GM12878 (cell line): ENCODE measurements at regions of chr3 and their contacts with region 1.

Region 1: DNA sequence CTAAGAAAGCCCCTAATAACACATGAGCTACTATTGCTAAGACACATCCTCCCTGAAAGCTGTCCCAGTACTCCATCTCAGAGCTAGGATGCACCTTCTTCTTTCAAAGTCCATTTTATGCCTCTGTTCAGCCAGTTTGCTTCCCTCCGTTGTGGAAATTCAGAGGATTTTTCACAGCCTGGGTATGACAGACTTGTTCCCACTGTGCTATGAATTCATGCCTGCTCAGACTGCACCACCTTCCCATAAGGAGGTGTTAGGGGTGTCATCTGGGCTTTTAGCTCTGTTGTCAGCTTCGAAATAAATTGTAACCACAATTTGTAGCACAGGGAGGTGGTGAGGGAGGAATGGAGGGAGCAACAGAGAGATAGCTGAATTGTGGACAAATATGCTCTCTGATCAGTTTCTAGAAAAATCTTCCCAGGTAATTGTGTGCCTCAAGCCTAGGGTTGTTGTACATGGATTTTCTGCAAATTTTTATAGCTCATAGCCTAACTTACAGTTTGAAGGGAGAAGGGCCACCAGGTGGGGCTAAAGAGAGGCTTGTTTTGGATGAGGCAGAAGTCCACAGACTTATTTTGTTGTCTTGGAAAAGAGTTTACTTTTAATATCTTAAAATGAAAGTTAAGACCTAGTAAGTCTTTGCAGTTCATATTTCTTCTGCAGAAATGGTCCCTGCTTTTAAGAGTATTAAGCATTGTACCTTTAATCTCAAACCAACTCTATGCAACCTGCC is 462.0 kb downstream of the PDCD6IP start:
- DNase-seq: no peak
- ATAC-seq: peak; percentile 76
- H3K4me3 ChIP-seq: no peak overlapping the region
- H3K27ac ChIP-seq: no peak overlapping the region
- H3K4me1 ChIP-seq: no peaks in the 10 kb centered on the region
- H3K27me3 ChIP-seq: no peaks in the 10 kb centered on the region
- CTCF ChIP-seq: peak; percentile 67 to 71 (median 68)
- EP300 ChIP-seq: no peak
- POLR2A ChIP-seq: no peak
- RAD21 ChIP-seq: peak; percentile 74

Region 2: DNA sequence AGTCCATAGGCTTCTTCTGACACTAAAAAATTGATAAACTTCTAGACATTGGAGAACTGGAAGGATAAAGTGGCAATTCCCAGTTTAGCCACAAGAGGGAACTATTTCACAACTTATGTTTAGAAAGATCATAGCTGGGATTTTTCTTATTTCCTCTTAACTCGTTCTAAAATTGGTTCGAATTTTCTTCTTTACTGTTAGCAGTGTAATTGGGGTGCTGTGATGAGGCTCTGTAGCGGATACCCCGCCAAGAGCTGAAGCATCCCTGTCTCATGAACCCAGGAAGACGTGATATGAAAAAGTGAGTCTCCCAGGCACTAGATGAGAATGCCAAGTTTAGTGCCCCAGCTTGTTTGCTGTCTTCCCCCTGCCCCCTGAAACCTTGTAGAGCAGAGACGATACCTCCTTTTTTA is 376.9 kb before region 1 on chr3:
- CTCF ChIA-PET with region 1: interaction called, 36 read pairs
- POLR2A ChIA-PET with region 1: no interaction called
- RAD21 ChIA-PET with region 1: interaction called, 19 read pairs
- SMC1A ChIA-PET with region 1: interaction called, 13 read pairs
- in situ Hi-C with region 1: no loop called
- intact Hi-C with region 1: loop called (anchors 5 kb)
- DNase-seq: no peak
- ATAC-seq: peak; percentile 64
- H3K4me3 ChIP-seq: no peak overlapping the region
- H3K27ac ChIP-seq: no peak overlapping the region
- H3K4me1 ChIP-seq: peaks cover 4% of the 10 kb centered on the region; the same call in 1 of the 2 replicates
- H3K27me3 ChIP-seq: no peaks in the 10 kb centered on the region
- CTCF ChIP-seq: peak; percentile 63 to 77 (median 75)
- EP300 ChIP-seq: no peak
- POLR2A ChIP-seq: no peak
- RAD21 ChIP-seq: peak; percentile 78

Region 3: GRCh38 chr3:34106879-34107278 is 153.6 kb before region 1 on chr3:
- CTCF ChIA-PET with region 1: interaction called, 15 read pairs
- POLR2A ChIA-PET with region 1: no interaction called
- RAD21 ChIA-PET with region 1: interaction called, 4 read pairs
- SMC1A ChIA-PET with region 1: interaction called, 11 read pairs
- in situ Hi-C with region 1: no loop called
- intact Hi-C with region 1: no loop called
- DNase-seq: peak; percentile 51
- ATAC-seq: peak; percentile 73
- H3K4me3 ChIP-seq: no peak overlapping the region
- H3K27ac ChIP-seq: peak overlapping the region; percentile 60
- H3K4me1 ChIP-seq: peaks cover 36% of the 10 kb centered on the region
- H3K27me3 ChIP-seq: no peaks in the 10 kb centered on the region
- CTCF ChIP-seq: peak; percentile 57 to 78 (median 69)
- EP300 ChIP-seq: no peak
- POLR2A ChIP-seq: no peak
- RAD21 ChIP-seq: peak; percentile 69

Region 4: GRCh38 chr3:34277110-34277509 is 16.7 kb after region 1 on chr3:
- CTCF ChIA-PET with region 1: interaction called, 33 read pairs
- POLR2A ChIA-PET with region 1: no interaction called
- RAD21 ChIA-PET with region 1: interaction called, 10 read pairs
- SMC1A ChIA-PET with region 1: interaction called, 14 read pairs
- in situ Hi-C with region 1: no loop called
- intact Hi-C with region 1: no loop called
- DNase-seq: no peak
- ATAC-seq: peak; percentile 46; the same call in 2 of the 3 replicates
- H3K4me3 ChIP-seq: no peak overlapping the region
- H3K27ac ChIP-seq: no peak overlapping the region
- H3K4me1 ChIP-seq: no peaks in the 10 kb centered on the region
- H3K27me3 ChIP-seq: no peaks in the 10 kb centered on the region
- CTCF ChIP-seq: peak in 2 of 3 experiments; percentile 7 to 49; a peak in 2 of 6 replicates
- EP300 ChIP-seq: no peak
- POLR2A ChIP-seq: no peak
- RAD21 ChIP-seq: peak; percentile 45

Region 5: GRCh38 chr3:34387826-34388564 is 127.6 kb after region 1 on chr3:
- CTCF ChIA-PET with region 1: interaction called, 14 read pairs
- POLR2A ChIA-PET with region 1: no interaction called
- RAD21 ChIA-PET with region 1: interaction called, 5 read pairs
- SMC1A ChIA-PET with region 1: interaction called, 11 read pairs
- in situ Hi-C with region 1: no loop called
- intact Hi-C with region 1: no loop called
- DNase-seq: no peak
- ATAC-seq: no peak
- H3K4me3 ChIP-seq: no peak overlapping the region
- H3K27ac ChIP-seq: no peak overlapping the region
- H3K4me1 ChIP-seq: no peaks in the 10 kb centered on the region
- H3K27me3 ChIP-seq: no peaks in the 10 kb centered on the region
- CTCF ChIP-seq: no peak
- EP300 ChIP-seq: no peak
- POLR2A ChIP-seq: no peak
- RAD21 ChIP-seq: no peak